Endothelial cell of umbilical vein (primary cell): ENCODE measurements at regions of chr1 and their contacts with region 1.

Region 1: GRCh38 chr1:11037740-11038182 is 9.3 kb downstream of the MASP2 start:
- DNase-seq: peak; percentile 87
- H3K4me3 ChIP-seq: no peak overlapping the region
- H3K27ac ChIP-seq: no peak overlapping the region
- H3K4me1 ChIP-seq: no peaks in the 10 kb centered on the region
- H3K27me3 ChIP-seq: no peaks in the 10 kb centered on the region
- CTCF ChIP-seq: peak; percentile 94
- POLR2A ChIP-seq: no peak

Region 2: GRCh38 chr1:11059990-11060830 is 22.4 kb after region 1 on chr1 and contains the start of gene SRM:
- CTCF ChIA-PET with region 1: interaction called, 69 read pairs
- POLR2A ChIA-PET with region 1: no interaction called
- dilution Hi-C with region 1: no loop called
- intact Hi-C with region 1: loop called (anchors 1 kb)
- DNase-seq: peak; percentile 89
- H3K4me3 ChIP-seq: peak within 1 kb of the TSS; percentile 88 to 91 (median 89)
- H3K27ac ChIP-seq: peak within 1 kb of the TSS; percentile 5
- H3K4me1 ChIP-seq: peaks cover 13% of the 10 kb centered on the region
- H3K27me3 ChIP-seq: no peaks in the 10 kb centered on the region
- CTCF ChIP-seq: peak; percentile 13 to 45
- POLR2A ChIP-seq: peak; percentile 84
- total RNA-seq, gene SRM: 167 and 172 TPM in 2 replicates

Region 3: DNA sequence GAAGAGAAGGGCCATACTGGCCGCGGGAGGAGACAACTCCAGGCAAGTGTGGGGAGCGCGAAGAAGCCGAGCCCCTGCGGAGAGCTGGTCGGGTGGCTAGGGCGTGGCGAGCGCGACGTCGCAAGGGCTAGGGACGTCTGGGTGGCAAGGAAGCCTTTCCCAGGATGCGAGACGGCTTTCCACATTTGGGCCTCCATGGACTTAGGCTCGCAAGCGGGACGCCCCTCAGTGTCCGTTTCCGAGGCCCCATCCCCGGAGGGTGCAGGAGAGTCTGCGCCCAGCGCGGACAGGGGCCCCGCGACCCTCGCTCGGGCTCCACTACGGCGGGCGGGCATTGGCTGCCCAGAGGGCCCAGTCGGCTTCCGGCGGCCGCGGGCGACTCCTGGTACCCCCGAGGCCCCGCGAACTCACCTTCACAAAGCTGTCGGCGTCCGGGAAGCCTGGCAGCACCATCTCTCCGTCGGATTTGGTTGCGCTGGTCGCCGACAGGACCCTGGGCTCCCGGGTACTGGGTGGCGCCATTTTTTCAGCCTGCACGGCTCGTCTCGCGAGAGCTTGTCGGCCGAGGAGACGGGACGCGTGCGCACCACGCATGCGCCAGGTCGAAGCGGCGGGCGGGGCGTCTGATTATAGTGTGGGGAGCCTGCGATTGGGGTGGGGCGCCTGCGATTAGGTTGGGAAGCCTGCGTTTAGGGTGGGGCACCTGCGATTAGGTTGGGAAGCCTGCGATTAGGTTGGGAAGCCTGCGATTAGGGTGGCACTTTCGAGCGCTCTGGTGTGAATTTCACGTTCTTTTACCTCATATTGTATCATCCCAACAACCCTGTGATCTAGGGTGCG is 61.8 kb after region 1 on chr1 and contains the start of gene EXOSC10:
- CTCF ChIA-PET with region 1: interaction called, 16 read pairs
- POLR2A ChIA-PET with region 1: no interaction called
- dilution Hi-C with region 1: no loop called
- intact Hi-C with region 1: no loop called
- DNase-seq: peak; percentile 88
- H3K4me3 ChIP-seq: peak within 1 kb of the TSS; percentile 49 to 100 (median 99)
- H3K27ac ChIP-seq: peak within 1 kb of the TSS; percentile 84
- H3K4me1 ChIP-seq: peaks cover 12% of the 10 kb centered on the region
- H3K27me3 ChIP-seq: no peaks in the 10 kb centered on the region
- CTCF ChIP-seq: no peak
- POLR2A ChIP-seq: peak; percentile 47
- total RNA-seq, gene EXOSC10: 103 and 104 TPM in 2 replicates

Region 4: DNA sequence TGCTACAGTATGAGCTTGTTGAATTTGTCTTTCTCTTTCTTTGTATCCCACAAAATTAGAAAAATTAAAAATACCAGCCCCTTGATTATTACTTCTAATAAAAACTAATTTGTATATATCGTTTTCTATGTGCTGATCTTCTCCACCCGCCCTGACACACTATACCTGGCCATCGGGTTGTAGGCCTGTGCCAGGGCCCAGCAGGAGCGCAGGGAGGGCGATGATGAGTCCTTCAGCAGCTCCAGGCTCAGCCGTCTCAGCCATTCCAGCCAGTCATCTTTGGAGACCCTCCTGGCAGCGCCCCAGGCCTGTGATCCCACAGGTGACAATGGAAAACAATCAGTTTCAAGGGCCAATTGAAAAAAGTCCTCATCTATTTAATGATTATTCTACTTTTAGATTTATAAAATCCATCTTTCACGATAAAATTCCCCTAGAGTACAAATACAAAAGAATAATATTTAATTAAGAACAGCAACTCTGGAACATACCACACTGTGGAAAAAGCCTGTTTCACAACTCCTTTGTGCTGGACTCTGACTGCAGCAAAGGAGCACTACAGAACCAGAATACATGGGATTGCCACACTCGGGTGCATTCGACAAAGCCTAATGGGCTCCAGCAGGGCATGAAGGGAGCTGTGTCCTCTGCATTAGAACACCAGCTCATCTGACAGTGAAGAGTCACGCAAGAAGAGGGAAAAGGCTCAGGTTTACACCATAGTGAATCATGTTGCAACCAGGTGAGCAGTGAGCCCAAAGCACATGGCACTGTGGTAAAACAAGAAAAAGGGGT is 166.8 kb after region 1 on chr1:
- CTCF ChIA-PET with region 1: interaction called, 12 read pairs
- POLR2A ChIA-PET with region 1: no interaction called
- dilution Hi-C with region 1: no loop called
- intact Hi-C with region 1: no loop called
- DNase-seq: no peak
- H3K4me3 ChIP-seq: no peak overlapping the region
- H3K27ac ChIP-seq: no peak overlapping the region
- H3K4me1 ChIP-seq: no peaks in the 10 kb centered on the region
- H3K27me3 ChIP-seq: no peaks in the 10 kb centered on the region
- CTCF ChIP-seq: no peak
- POLR2A ChIP-seq: no peak

Region 5: DNA sequence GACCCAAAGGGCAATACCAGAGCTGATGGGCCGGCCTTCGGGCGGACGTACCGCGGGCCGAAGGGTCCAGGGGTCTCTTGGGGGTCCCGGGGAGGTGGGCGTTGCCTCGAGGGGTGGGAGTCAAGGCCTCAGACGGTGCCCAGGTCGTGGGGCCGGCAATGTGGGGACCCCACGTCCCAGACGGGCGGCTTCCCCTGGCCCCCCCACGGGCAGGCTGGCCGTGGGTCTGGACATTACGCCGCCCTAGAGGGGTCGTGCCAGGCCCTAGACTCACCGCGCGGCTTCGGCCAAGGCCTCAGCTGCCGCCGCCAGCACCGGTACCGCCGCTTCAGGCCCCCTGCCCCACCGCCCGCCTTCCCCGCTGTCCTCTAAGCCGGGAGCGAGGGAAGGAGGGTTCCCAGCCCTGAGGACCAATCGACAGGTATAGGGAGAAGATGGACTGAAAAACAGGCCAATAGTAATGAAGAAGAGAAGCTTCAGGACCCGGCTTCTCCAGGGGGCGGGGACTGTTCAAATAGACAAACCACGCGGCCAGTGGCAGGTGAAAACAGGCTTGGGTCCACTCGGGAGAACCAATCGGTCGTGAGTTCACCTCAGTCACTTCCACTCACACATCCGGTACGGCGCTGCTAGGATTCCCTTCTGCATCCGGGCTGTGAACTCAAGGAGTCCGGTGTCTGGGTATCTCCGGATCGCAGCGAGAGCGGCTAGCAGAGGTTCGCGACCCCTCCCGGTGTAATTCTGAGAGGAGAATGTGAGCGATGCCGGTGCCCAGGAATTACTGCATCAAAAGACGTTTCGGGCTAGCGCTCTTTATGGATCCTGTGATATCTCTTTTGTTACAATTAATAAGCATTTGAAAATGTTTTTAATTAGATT is 224.6 kb after region 1 on chr1 and contains the start of gene MTOR:
- CTCF ChIA-PET with region 1: interaction called, 12 read pairs
- POLR2A ChIA-PET with region 1: no interaction called
- dilution Hi-C with region 1: no loop called
- intact Hi-C with region 1: no loop called
- DNase-seq: peak; percentile 100
- H3K4me3 ChIP-seq: peak within 1 kb of the TSS; percentile 92 to 99 (median 94)
- H3K27ac ChIP-seq: peak within 1 kb of the TSS; percentile 61
- H3K4me1 ChIP-seq: peaks cover 10% of the 10 kb centered on the region
- H3K27me3 ChIP-seq: no peaks in the 10 kb centered on the region
- CTCF ChIP-seq: peak in 1 of 2 donors; percentile 4
- POLR2A ChIP-seq: peak; percentile 78
- total RNA-seq, gene MTOR: 50.4 and 53.1 TPM in 2 replicates

Region 6: DNA sequence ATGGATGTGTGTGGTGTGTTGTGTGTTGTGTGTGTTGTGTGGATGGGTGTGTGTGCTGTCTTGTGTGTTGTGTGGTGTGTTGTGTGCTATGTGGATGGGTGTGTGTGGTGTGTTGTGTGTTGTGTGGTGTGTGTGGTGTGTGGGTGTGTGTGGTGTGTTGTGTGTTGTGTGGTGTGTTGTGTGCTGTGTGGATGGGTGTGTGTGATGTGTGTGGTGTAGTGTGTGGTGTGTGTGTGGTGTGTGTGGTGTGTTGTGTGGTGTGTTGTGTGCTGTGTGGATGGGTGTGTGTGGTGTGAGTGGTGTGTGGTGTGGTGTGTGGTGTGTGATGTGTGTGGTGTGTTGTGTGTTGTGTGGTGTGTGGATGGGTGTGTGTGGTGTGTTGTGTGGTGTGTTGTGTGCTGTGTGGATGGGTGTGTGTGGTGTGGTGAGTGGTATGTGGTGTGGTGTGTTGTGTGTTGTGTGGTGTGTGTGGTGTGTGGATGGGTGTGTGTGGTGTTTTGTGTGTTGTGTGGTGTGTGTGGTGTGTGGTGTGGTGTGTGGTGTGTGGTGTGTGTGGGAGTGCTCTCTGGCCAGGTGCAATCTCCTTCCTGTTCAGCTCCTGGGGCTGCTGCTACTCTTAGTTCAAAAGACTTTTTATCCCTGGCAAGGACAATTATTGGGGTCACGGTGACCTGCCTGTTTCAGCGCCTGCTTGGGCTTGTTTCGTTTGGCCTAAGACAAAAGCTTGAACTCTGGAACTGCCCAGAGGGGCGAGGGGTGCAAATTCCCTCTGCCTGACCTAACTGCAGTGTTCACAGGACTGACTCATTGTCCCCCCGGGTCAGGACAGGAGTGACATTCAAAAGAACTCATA is 336.4 kb after region 1 on chr1:
- CTCF ChIA-PET with region 1: no interaction called
- POLR2A ChIA-PET with region 1: no interaction called
- dilution Hi-C with region 1: no loop called
- intact Hi-C with region 1: no loop called
- DNase-seq: no peak
- H3K4me3 ChIP-seq: no peak overlapping the region
- H3K27ac ChIP-seq: no peak overlapping the region
- H3K4me1 ChIP-seq: no peaks in the 10 kb centered on the region
- H3K27me3 ChIP-seq: no peaks in the 10 kb centered on the region
- CTCF ChIP-seq: no peak
- POLR2A ChIP-seq: no peak

Region 7: DNA sequence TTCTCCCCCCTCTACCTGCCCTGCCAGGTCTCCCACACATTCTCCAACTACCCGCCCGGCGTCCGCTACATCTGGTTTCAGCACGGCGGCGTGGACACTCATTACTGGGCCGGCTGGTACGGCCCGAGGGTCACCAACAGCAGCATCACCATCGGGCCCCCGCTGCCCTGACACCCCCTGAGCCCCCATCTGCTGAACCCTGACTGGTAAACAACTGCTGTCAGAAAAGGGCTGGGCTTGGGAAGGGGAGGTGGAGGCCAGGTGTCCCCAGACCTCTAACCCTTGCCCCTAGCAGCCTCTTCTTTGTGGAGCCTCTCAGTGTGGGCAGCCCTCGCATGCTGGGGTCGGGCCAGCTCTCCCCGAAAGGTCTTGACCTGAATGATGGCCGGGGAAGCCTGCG is 623.3 kb after region 1 on chr1:
- CTCF ChIA-PET with region 1: interaction called, 18 read pairs
- POLR2A ChIA-PET with region 1: no interaction called
- dilution Hi-C with region 1: no loop called
- intact Hi-C with region 1: no loop called
- DNase-seq: no peak
- H3K4me3 ChIP-seq: no peak overlapping the region
- H3K27ac ChIP-seq: no peak overlapping the region
- H3K4me1 ChIP-seq: no peaks in the 10 kb centered on the region
- H3K27me3 ChIP-seq: no peaks in the 10 kb centered on the region
- CTCF ChIP-seq: no peak
- POLR2A ChIP-seq: no peak